ENCODE measurements at regions of chr11 and their contacts with region 1.

Region 1: DNA sequence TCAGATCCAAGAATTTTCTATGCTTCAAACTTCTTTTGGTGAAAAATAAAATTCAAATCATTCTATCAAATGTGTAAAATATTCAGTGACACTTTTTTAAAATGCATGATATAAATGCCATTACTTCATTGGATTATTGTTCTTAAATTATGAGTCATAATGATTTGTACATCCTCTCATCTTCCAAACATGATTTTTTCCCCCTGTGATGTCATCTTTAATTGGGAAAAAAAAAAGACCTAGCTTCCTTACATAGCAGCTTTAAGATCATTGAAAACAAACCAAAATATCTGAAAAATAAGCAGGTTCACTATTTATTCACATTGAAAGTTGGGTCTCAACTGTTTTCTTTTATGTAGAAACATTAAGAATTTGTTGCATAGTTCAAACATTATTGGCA is 1549.4 kb downstream of the LRRC4C start:
- DNase-seq: no peak
- H3K4me3 ChIP-seq: no peak overlapping the region
- H3K27ac ChIP-seq: no peak overlapping the region
- H3K27me3 ChIP-seq: no peaks in the 10 kb centered on the region
- CTCF ChIP-seq: no peak

Region 2: GRCh38 chr11:39860931-39861330 is 49.2 kb before region 1 on chr11:
- intact Hi-C with region 1: loop called in 1 of 2 experiments (anchors 10 kb)
- DNase-seq: no peak
- H3K4me3 ChIP-seq: no peak overlapping the region
- H3K27ac ChIP-seq: no peak overlapping the region
- H3K27me3 ChIP-seq: no peaks in the 10 kb centered on the region
- CTCF ChIP-seq: no peak

Region 3: DNA sequence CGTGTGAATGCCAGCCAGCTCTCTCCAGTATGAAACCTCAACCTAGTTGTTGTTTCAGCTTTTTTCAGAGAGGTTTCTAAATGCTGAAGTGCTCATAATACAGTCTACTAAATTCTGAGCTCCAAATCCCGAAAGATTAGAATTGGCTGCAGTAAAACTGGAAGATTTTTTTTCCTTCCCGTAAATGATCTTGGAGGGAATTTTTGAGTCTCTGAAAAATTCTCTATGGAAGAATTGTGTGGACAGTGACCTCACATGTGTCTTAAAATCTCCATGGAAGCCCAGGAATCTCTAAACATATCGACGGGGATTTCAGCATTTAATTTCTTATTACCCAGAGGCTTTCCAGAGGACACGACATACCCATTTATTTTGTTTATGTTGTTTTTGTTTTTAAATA is 50.1 kb after region 1 on chr11:
- intact Hi-C with region 1: no loop called
- DNase-seq: no peak
- H3K4me3 ChIP-seq: peak overlapping the region in 16 of 59 donors; percentile 0 to 33 (median 12)
- H3K27ac ChIP-seq: no peak overlapping the region
- H3K27me3 ChIP-seq: no peaks in the 10 kb centered on the region
- CTCF ChIP-seq: no peak

Region 4: DNA sequence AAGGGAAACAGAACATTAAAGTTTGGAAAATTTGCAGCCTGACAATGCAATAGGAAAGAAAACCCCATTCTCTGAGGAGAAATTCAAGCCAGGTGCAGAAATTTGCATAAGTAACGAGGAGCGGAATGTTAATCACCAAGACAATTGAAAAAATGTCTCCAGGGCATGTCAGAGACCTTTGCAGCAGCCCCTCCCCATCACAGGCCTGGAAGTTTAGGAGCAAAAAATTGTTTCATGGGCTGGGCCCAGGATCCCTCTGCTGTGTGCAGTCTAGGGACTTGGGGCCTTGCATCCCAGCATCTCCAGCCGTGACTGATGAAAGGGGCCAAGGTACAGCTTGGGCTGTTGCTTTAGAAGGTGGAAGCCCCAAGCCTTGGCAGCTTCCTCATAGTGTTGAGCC is 769.2 kb after region 1 on chr11:
- intact Hi-C with region 1: no loop called
- DNase-seq: no peak
- H3K4me3 ChIP-seq: no peak overlapping the region
- H3K27ac ChIP-seq: no peak overlapping the region
- H3K27me3 ChIP-seq: no peaks in the 10 kb centered on the region
- CTCF ChIP-seq: no peak

Measured in dorsolateral prefrontal cortex (tissue), 120 donors.